Activated naive CD4-positive, alpha-beta T cell treated with anti-CD3 and anti-CD28 coated beads for 36 hours (primary cell): ENCODE measurements at regions of chr6 and their contacts with region 1.

Region 1: DNA sequence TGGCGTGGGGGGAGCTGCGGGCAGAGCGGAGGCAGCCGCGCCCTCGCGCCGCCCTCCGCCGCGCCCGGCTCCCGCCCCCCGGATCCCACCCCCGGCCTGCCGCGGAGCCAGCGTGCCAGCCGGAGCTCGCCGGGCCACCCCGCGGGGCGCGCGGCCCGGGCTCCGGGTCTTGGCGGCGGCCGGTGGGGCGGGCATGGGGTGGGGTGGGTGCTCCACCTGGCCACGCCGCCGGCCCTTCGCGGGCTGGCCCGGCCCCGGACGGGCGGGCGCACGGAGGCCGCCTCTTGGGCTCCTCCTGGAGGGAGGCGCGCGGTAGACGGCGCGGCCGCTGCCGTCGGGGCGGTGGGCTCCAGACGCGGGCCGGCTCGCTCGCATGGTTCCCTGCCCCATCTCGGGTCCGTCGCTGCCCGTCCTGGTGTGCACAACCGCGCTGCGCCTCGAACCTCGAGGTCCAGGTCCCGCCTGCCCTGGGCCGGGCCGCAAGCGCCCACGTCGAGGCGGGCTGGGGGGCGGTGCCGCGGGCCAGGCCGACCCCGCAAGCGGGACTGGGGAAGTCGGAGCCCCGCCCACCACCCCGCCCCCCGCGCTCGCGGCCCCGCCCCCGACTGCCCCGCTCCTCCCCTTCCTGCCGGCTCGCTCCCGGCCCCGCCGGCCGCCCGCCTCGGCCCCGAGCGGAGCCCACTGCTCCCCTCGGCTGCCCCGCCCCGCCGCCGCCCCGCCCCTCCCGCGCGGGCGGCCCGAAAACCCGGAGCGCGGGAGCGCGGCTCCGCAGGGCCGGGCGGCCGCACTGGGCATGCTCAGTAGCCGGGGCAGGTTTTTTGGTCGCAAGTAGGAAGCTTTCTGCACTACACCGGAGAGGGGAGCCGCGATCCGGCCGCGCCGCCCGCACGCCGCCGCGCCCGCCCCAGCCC is at the start of gene CDYL:
- DNase-seq: peak; percentile 85
- H3K4me3 Mint-ChIP-seq: peak within 1 kb of the TSS; percentile 85
- H3K27ac Mint-ChIP-seq: peak within 1 kb of the TSS; percentile 81
- H3K4me1 Mint-ChIP-seq: peaks cover 56% of the 10 kb centered on the region
- H3K27me3 Mint-ChIP-seq: peaks cover 12% of the 10 kb centered on the region
- total RNA-seq, gene CDYL: 23.8 to 24.3 TPM

Region 2: DNA sequence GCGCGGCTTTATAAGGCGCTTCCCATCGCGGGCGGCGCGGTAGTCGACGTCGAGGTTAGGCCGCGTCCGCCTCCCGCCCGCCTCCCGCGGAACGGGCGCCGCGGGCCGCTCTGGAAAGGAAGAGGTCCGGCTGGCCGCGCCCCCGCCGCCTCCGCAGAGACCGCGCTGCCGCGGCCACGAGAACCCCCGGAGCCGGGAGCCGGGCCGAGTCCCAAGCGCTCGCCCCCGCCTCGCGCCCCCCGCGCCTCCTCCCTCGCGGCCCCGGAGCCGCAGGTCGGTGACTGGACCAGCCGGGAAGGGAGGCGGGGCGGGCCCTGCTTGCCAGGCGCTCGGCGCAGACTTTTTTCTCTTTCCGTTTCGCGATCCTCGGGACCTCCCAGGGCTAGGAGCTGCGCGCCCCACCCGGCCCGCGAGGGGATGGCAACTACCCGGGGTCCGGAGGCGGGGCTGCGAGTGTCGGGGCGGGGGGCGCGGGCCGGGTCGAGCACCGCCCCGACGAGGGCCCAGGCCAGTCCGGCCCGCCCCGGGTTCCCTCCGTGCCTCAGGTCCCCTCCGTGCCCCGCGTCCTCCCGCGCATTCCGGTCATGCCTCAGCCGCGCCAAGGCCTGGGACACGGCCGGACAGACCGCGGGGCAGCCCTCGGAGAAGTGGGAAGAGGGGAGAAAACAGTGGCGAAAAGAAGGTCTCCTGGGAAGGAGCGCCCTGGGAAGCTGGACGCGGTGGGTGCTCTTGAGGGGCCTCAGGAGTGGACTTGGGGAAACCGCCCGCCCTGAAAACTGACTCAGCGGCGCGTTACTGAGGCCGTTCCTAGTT is 1023.9 kb before region 1 on chr6:
- CTCF ChIA-PET with region 1: no interaction called
- intact Hi-C with region 1: loop called (anchors 5 kb)
- DNase-seq: peak; percentile 76
- H3K4me3 Mint-ChIP-seq: peak overlapping the region; percentile 43
- H3K27ac Mint-ChIP-seq: no peak overlapping the region
- H3K4me1 Mint-ChIP-seq: no peaks in the 10 kb centered on the region
- H3K27me3 Mint-ChIP-seq: peaks cover 33% of the 10 kb centered on the region

Region 3: DNA sequence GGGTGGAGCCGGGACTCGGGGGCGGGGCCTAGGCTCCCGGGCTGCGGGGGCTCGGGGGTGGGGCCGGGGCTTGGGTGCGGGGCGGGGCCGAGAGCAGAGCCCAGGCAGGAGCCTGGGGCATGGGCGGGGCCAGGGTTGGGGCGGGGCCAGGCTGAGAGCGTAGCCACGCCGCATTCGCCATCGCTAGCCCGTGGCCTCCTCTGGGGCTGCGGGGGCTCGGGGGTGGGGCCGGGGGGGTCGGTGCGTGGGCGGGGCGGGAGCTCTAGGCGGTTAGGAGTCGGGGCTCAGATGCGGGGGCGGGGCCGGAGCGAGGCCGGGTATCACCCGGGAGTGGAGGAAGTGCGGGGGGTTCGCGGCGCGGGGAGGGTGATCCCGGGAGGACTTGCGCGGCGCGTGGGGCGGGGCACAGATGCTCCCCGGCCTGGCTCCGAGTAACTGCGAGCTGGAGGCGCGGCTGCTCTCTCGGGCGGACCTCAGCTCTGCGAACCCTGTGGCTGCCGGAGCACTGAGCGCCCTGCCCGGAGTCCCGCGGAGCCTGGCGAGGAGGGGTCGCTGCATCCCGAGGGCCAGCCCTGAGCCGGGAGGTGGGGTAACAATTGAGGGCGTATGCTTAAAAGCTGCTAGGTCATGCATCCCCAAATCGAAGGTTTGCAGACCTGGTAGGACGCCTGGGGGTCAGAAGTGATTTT is 640.0 kb before region 1 on chr6:
- CTCF ChIA-PET with region 1: no interaction called
- intact Hi-C with region 1: loop called (anchors 2 kb)
- DNase-seq: peak; percentile 92
- H3K4me3 Mint-ChIP-seq: peak overlapping the region; percentile 81
- H3K27ac Mint-ChIP-seq: peak overlapping the region; percentile 65
- H3K4me1 Mint-ChIP-seq: peaks cover 40% of the 10 kb centered on the region
- H3K27me3 Mint-ChIP-seq: no peaks in the 10 kb centered on the region

Region 4: DNA sequence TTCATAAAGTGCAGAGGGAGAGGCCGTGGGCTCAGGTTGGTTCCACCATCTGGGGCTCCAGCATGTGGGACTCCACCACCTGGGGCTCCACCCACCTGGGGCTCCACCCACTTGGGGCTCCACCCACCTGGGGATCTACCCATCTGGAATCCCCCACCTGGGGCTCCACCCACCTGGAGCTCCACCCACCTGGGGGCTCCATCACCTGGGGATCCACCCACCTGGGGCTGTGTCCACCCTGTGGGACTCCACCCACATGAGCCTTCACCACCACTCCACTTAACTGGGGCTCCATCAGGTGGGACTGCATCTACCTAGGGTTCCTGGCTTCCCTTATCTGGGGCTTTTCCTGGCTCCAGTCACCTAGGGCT is 225.6 kb before region 1 on chr6:
- CTCF ChIA-PET with region 1: no interaction called
- intact Hi-C with region 1: no loop called
- DNase-seq: no peak
- H3K4me3 Mint-ChIP-seq: no peak overlapping the region
- H3K27ac Mint-ChIP-seq: no peak overlapping the region
- H3K4me1 Mint-ChIP-seq: no peaks in the 10 kb centered on the region
- H3K27me3 Mint-ChIP-seq: peaks cover 25% of the 10 kb centered on the region

Region 5: DNA sequence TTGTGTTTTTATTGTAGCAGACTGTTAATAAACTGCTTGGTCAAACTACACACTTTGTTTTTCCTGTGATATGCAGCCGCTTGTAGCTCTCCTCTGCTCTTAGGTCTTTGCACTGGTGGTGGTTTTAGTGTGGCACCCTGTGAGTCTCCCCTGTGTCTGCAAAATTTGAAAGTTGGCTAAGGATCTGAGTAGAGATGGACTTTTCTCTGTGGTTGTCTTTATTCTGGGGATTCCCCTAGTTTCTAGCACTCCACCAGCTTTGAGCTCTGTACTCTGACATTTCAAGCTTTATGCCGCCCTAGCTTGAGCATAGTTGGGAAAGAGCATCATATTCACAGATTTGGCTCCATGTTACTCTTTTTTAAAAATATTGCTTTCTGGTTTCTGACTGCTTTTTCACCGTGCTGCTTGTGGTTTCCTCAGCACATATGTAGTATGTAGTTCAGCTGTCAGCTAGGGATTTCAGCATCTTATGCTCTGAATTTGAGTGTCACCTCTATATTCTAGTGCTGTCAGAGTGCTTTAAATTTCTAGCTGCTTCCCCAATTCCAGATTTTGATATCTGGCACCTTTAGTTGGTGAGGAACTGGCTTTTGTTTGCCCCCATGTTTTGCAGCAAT is 25.8 kb after region 1 on chr6:
- CTCF ChIA-PET with region 1: interaction called, 3 read pairs
- intact Hi-C with region 1: loop called (anchors 1 kb)
- DNase-seq: peak; percentile 14
- H3K4me3 Mint-ChIP-seq: no peak overlapping the region
- H3K27ac Mint-ChIP-seq: no peak overlapping the region
- H3K4me1 Mint-ChIP-seq: peaks cover 67% of the 10 kb centered on the region
- H3K27me3 Mint-ChIP-seq: no peaks in the 10 kb centered on the region

Region 6: DNA sequence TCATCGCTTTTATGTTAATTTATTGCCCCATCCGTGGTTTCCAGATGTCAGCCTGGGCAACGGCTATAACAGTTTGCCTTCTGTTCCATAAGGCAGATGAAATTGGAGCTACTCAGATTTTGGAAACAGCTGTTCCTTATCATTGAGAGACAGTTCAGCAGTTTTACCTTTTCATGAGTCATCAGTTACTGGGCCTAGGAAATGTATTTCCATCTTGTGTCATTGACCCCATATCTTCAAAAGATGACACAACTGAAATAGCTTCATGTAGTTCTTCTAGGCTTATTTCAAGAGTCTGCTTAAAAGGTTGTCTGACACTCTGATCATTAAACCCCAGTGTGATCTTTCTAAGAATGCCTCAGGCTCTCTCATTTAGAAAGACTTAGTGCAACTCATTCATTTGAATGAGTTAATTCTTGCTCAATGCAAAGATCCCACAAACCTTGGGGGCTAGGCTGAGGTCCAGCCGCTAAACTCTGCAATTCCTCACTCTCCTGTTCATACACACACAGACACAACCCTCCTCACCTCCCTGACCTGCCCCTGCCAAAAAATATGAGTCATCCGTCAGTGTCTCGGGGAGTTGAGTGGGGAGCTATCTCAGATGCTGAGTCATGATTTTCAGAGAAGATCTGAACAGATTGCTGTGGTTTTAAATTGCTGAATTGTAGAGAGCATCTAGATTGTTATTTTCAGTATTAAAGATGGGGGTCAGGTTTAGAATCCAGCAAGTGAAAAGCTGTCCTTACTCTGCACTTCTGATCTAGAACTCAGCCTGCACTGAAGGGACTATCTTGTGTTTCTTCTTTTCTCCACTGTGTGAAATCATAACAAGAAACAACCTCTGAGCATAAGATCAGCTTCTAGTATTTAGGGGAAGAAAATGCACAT is 166.2 kb after region 1 on chr6:
- CTCF ChIA-PET with region 1: no interaction called
- intact Hi-C with region 1: loop called (anchors 1 kb)
- DNase-seq: peak; percentile 58
- H3K4me3 Mint-ChIP-seq: no peak overlapping the region
- H3K27ac Mint-ChIP-seq: peak overlapping the region; percentile 36
- H3K4me1 Mint-ChIP-seq: peaks cover 32% of the 10 kb centered on the region
- H3K27me3 Mint-ChIP-seq: no peaks in the 10 kb centered on the region

Region 7: DNA sequence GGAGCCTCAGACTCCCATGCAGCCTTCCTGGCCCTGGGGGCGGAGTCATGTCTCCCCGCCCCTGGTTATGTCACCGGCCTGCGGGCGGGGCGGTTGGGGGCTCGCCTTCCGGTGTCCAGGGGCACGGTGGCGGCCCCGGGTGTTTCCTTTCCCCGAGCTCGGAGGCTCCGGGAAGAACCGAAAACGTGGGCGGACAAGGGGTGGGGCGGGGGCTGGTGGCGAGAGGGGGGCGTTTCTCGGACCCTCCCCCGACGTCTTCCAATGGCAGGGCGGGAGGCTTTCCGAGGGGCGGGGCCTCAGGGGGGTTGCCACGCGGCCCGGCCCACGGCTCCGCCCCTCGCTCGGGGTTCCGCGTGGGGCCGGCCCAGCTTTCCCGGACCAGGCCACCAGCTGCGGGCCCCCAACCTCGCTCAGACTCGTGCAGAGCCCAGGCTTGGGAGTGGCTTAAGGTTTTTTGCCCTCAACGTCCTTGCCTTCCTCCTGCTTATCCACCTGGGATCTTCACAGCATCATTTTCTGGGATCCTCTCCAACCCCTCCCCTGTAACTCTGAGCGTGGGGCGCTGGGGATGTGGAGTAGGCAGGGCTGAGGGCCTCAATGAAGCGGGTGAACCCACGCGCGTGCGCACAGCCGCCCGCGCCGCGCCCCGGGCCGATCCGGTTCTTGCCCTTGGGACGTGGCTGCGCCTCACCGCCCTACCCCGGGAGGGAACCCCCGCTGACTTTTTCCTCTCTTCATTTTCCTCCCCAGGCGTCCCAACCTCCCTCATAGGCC is 1233.0 kb after region 1 on chr6:
- CTCF ChIA-PET with region 1: no interaction called
- intact Hi-C with region 1: loop called (anchors 10 kb)
- DNase-seq: peak; percentile 73
- H3K4me3 Mint-ChIP-seq: peak overlapping the region; percentile 67
- H3K27ac Mint-ChIP-seq: no peak overlapping the region
- H3K4me1 Mint-ChIP-seq: peaks cover 26% of the 10 kb centered on the region
- H3K27me3 Mint-ChIP-seq: peaks cover 66% of the 10 kb centered on the region